ENCODE measurements at regions of chr3 and their contacts with region 1.

Region 1: GRCh38 chr3:70716832-70717231 is 404.4 kb upstream of the MDFIC2 start:
- DNase-seq: peak; percentile 86
- H3K4me3 ChIP-seq: no peak overlapping the region
- H3K27ac ChIP-seq: no peak overlapping the region
- H3K4me1 ChIP-seq: peaks cover 5% of the 10 kb centered on the region
- H3K27me3 ChIP-seq: no peaks in the 10 kb centered on the region
- CTCF ChIP-seq: peak; percentile 17 to 46
- POLR2A ChIP-seq: no peak

Region 2: GRCh38 chr3:69739204-69740102 is 977.4 kb before region 1 on chr3 and contains the start of gene MITF:
- CTCF ChIA-PET with region 1: no interaction called
- POLR2A ChIA-PET with region 1: no interaction called
- dilution Hi-C with region 1: no loop called
- intact Hi-C with region 1: no loop called
- DNase-seq: peak; percentile 94
- H3K4me3 ChIP-seq: peak within 1 kb of the TSS; percentile 63 to 87 (median 74)
- H3K27ac ChIP-seq: no peak within 1 kb of the TSS
- H3K4me1 ChIP-seq: peaks cover 16% of the 10 kb centered on the region
- H3K27me3 ChIP-seq: peaks cover 0 to 6% of the 10 kb centered on the region in 2 experiments
- CTCF ChIP-seq: no peak
- POLR2A ChIP-seq: peak; percentile 30
- total RNA-seq, gene MITF: 2.5 and 3.9 TPM in 2 replicates

Region 3: DNA sequence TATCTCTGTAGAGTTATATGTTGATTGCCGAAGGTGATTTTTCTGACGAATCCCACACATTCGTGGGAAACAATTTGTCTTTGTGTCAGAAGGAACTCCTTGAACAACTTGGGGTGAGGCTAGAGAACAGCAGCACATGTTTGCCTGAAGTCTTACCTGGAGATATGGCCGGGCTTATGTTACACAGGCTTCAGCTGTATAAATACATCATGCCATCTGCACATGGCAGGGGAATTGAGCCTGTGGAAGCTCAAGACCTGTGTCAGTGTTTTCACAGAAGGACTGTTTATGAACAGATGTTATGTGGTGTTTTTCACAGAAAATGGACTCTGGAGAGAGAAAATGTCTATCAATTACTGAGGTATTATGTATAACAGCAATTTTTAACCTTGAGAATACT is 200.8 kb before region 1 on chr3:
- CTCF ChIA-PET with region 1: no interaction called
- POLR2A ChIA-PET with region 1: no interaction called
- dilution Hi-C with region 1: no loop called
- intact Hi-C with region 1: no loop called
- DNase-seq: no peak
- H3K4me3 ChIP-seq: no peak overlapping the region
- H3K27ac ChIP-seq: no peak overlapping the region
- H3K4me1 ChIP-seq: no peaks in the 10 kb centered on the region
- H3K27me3 ChIP-seq: peaks cover 12 to 13% of the 10 kb centered on the region in 2 experiments
- CTCF ChIP-seq: no peak
- POLR2A ChIP-seq: no peak

Region 4: GRCh38 chr3:70919091-70919490 is 202.3 kb after region 1 on chr3:
- CTCF ChIA-PET with region 1: interaction called, 10 read pairs
- POLR2A ChIA-PET with region 1: no interaction called
- dilution Hi-C with region 1: no loop called
- intact Hi-C with region 1: no loop called
- DNase-seq: no peak
- H3K4me3 ChIP-seq: no peak overlapping the region
- H3K27ac ChIP-seq: no peak overlapping the region
- H3K4me1 ChIP-seq: peaks cover 8% of the 10 kb centered on the region
- H3K27me3 ChIP-seq: no peaks in the 10 kb centered on the region
- CTCF ChIP-seq: no peak
- POLR2A ChIP-seq: no peak

Region 5: GRCh38 chr3:70989174-70989573 is 272.3 kb after region 1 on chr3:
- CTCF ChIA-PET with region 1: interaction called, 19 read pairs
- POLR2A ChIA-PET with region 1: no interaction called
- dilution Hi-C with region 1: no loop called
- intact Hi-C with region 1: no loop called
- DNase-seq: peak; percentile 62
- H3K4me3 ChIP-seq: no peak overlapping the region
- H3K27ac ChIP-seq: peak overlapping the region; percentile 33
- H3K4me1 ChIP-seq: peaks cover 22% of the 10 kb centered on the region
- H3K27me3 ChIP-seq: no peaks in the 10 kb centered on the region
- CTCF ChIP-seq: no peak
- POLR2A ChIP-seq: no peak

Region 6: GRCh38 chr3:71022551-71023335 is 305.9 kb after region 1 on chr3:
- CTCF ChIA-PET with region 1: interaction called, 41 read pairs
- POLR2A ChIA-PET with region 1: no interaction called
- dilution Hi-C with region 1: no loop called
- intact Hi-C with region 1: loop called (anchors 1 kb)
- DNase-seq: peak; percentile 52
- H3K4me3 ChIP-seq: no peak overlapping the region
- H3K27ac ChIP-seq: no peak overlapping the region
- H3K4me1 ChIP-seq: no peaks in the 10 kb centered on the region
- H3K27me3 ChIP-seq: no peaks in the 10 kb centered on the region
- CTCF ChIP-seq: peak; percentile 20 to 30
- POLR2A ChIP-seq: no peak

Region 7: GRCh38 chr3:71069797-71070196 is 353.0 kb after region 1 on chr3:
- CTCF ChIA-PET with region 1: interaction called, 19 read pairs
- POLR2A ChIA-PET with region 1: no interaction called
- dilution Hi-C with region 1: no loop called
- intact Hi-C with region 1: loop called (anchors 2 kb)
- DNase-seq: peak; percentile 74
- H3K4me3 ChIP-seq: no peak overlapping the region
- H3K27ac ChIP-seq: no peak overlapping the region
- H3K4me1 ChIP-seq: peaks cover 30% of the 10 kb centered on the region
- H3K27me3 ChIP-seq: no peaks in the 10 kb centered on the region
- CTCF ChIP-seq: peak; percentile 42 to 52
- POLR2A ChIP-seq: no peak

Region 8: GRCh38 chr3:71681224-71681668 is 964.4 kb after region 1 on chr3:
- CTCF ChIA-PET with region 1: interaction called, 17 read pairs
- POLR2A ChIA-PET with region 1: no interaction called
- dilution Hi-C with region 1: no loop called
- intact Hi-C with region 1: no loop called
- DNase-seq: peak; percentile 73
- H3K4me3 ChIP-seq: no peak overlapping the region
- H3K27ac ChIP-seq: no peak overlapping the region
- H3K4me1 ChIP-seq: peaks cover 5% of the 10 kb centered on the region
- H3K27me3 ChIP-seq: no peaks in the 10 kb centered on the region
- CTCF ChIP-seq: peak; percentile 75 to 80
- POLR2A ChIP-seq: no peak